ENCODE measurements at regions of chr19 and their contacts with region 1.

Region 1: DNA sequence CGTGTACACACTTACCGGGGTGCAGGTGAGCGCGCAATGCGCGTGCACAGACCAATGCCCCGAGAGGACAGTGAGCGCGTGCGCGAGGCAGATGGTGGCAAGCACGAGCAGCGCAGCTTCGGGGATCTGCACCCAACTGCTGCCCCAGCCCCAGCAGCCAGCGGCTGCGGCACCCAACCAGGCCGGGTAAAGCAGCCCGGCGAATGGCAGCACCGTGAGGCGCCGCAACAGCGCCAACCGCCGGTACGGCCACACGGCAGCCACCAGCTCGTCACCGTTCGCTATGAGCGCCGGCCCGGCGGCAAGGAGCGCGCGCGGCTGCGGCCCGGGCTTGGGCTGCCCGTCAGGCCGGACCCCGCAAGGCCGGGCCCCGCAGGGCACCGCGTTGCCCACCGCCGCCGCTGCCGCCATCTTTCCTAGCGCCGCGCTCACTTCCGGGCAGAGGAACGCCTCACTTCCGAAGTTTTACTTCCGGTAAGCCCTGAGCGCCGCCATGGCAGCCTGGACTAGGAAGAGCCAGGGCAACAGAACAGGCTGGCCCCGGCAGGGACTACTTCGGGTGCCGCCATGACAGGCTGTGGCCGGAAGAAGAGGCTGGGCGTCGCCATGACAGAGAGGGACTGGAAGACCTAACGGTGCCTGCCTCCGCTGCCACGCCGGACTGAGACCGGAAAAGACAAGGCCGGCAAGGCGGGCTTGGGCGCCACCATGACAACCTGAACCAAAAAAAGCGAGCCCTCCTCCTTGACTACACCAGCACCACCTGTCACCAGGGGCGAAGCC is at the start of gene ATP13A1:
- DNase-seq: peak; percentile 93
- H3K4me3 Mint-ChIP-seq: peak within 1 kb of the TSS; percentile 89
- H3K27ac Mint-ChIP-seq: peak within 1 kb of the TSS; percentile 98
- H3K4me1 Mint-ChIP-seq: peaks cover 24% of the 10 kb centered on the region
- H3K27me3 Mint-ChIP-seq: no peaks in the 10 kb centered on the region
- total RNA-seq, gene ATP13A1: 71.6 and 74.8 TPM in 2 replicates

Region 2: GRCh38 chr19:19597809-19598306 is 65.6 kb before region 1 on chr19:
- intact Hi-C with region 1: loop called (anchors 2 kb)
- DNase-seq: peak; percentile 70
- H3K4me3 Mint-ChIP-seq: peak overlapping the region; percentile 73
- H3K27ac Mint-ChIP-seq: peak overlapping the region; percentile 99
- H3K4me1 Mint-ChIP-seq: peaks cover 59% of the 10 kb centered on the region
- H3K27me3 Mint-ChIP-seq: no peaks in the 10 kb centered on the region

Region 3: DNA sequence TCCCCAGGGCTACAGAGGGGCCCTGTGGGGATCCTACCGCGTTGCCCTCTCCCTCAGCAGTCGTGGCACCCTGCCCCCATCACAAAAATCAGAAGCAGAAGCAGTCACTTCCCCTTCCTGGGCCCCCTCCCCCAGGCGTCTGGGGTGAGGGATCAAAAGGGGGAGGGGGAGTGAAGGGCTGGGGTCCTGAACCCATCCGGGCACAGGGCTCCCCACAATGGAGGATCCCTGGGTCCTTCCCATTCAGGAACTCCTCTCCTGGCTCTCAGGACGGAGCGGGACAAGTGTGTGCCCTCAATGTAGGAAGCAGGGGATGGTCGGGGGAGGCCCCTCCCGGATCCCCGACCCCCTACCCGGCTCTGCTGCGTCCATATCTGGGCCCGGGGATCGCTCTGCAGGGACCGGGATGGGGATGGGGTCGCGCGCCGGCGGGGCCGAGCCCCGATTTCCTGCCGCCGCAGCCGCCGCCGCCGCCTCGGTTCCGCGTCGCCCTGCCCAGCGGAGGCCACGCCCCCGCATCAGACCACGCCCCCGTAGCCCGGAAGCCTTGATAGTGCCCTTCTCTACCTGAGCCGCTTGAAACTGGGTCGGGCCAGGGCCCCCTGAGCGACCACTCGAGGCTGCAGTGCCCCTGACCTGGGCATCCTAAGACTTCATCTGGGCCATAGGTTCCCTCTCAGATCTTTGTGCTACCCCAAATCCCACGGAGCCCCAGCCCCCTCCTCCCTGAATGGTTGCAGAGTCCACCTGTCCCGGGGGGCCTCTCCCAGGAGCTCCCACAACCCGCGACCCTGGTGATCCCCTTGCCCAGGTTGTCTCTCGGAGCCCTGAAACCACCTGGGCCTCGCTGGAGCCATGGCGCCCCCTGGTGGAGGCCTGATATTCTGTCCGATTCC is 20.0 kb before region 1 on chr19 and contains the start of gene GMIP:
- intact Hi-C with region 1: loop called (anchors 2 kb)
- DNase-seq: peak; percentile 82
- H3K4me3 Mint-ChIP-seq: peak within 1 kb of the TSS; percentile 93
- H3K27ac Mint-ChIP-seq: peak within 1 kb of the TSS; percentile 94
- H3K4me1 Mint-ChIP-seq: peaks cover 12% of the 10 kb centered on the region
- H3K27me3 Mint-ChIP-seq: no peaks in the 10 kb centered on the region
- total RNA-seq, gene GMIP: 66.0 and 67.5 TPM in 2 replicates

Region 4: DNA sequence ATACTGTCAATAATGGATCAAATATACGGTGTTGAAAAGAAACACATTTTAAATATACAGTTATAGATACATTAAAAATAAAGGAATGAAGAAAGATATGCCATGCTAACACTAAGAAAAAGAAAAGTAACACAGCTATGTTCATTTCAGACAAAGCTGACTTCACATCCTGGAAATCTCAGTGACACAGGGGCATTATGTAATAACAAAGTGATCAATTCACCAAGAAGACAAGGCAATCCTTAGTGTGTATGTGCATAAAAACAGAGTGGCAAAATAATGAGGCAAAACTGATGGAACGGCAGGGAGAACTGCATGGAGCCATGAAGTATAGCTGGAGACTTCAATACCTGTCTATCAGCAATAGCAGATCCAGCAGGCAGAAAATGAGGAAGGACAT is 56.4 kb after region 1 on chr19:
- intact Hi-C with region 1: no loop called
- DNase-seq: no peak
- H3K4me3 Mint-ChIP-seq: no peak overlapping the region
- H3K27ac Mint-ChIP-seq: no peak overlapping the region
- H3K4me1 Mint-ChIP-seq: no peaks in the 10 kb centered on the region
- H3K27me3 Mint-ChIP-seq: no peaks in the 10 kb centered on the region

Region 5: DNA sequence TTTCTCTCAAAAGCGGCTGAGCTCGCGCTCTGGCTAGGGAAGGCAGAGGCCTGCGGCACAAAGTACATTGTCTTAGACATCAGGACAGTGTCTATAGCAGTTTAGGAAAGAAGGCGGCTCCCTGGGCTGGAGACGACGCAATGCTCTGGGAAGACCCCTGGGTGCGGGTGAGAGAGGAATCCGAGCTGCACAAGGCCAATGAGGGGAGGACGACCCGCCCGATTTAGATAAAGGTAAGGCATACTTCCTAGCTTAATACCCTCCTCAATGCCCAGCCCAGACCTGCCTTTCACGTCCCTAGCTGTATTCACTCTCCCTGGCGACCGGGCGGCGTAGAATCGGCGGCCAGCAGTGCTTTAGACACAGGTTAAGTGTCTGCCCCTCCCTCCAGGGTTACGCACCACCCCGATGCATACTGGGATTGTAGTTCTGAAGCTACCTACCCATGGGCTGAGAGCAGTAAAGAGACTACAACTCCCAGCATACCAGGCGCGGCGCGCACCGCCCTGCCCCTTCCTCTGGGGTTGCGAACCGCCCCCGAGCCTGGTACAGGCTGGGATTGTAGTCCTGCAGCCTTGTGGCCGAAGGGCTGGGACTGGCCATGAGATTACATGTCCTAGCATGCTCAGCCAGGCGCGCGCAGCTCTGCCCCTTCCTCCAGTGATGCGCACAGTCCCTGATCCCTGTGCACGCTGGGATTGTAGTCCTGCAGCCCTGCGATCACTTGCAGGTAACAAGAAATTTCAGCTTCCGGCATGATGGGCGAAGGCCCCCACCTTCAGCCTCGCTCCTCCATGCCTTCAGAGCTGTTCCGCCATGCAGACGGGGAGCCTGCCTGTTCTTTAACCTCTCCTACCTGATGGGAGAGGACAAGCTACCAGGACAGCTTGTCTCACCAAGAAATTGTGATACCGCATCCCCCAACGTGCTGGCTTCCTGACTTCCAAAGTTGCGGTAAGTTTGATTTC is 112.9 kb after region 1 on chr19:
- intact Hi-C with region 1: loop called (anchors 1 kb)
- DNase-seq: peak; percentile 89
- H3K4me3 Mint-ChIP-seq: peak overlapping the region; percentile 96
- H3K27ac Mint-ChIP-seq: peak overlapping the region; percentile 86
- H3K4me1 Mint-ChIP-seq: peaks cover 27% of the 10 kb centered on the region
- H3K27me3 Mint-ChIP-seq: no peaks in the 10 kb centered on the region

Region 6: DNA sequence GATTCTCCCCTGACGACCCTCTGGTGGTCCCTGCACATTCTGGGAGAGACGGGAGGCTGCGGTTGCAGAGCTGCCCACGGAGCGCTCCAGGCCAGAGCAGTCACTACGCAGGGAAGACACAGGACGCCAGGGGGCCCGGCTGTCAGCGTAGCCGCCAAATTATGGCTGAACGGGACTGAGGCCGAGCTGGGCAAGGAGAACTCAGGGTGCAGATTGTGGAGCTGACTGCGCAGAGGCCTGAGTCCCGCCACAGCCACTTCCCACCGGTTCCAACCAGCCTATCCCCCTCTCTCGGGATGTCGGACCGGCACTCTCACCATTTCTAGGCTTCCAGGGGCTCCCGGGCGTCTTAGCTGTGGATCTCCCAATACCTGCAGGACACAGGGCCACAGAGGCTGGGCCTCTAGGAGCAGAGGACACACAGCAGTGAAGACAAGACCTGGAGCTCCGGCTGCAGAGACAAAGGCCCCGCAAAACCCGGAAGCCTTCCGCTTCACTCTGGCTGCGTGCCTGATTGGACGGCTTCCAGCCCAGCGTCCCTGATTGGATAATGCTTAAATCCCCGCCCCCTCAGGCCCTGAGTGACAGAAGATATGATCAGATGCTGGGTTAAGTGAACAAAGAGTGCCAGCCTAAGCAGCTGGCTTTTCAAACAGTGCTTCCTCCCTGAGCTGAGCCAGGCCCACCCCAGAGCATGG is 902.0 kb after region 1 on chr19 and contains the start of gene ZNF737:
- intact Hi-C with region 1: loop called (anchors 10 kb)
- DNase-seq: peak; percentile 86
- H3K4me3 Mint-ChIP-seq: peak within 1 kb of the TSS; percentile 97
- H3K27ac Mint-ChIP-seq: peak within 1 kb of the TSS; percentile 97
- H3K4me1 Mint-ChIP-seq: peaks cover 12% of the 10 kb centered on the region
- H3K27me3 Mint-ChIP-seq: no peaks in the 10 kb centered on the region
- total RNA-seq, gene ZNF737: 7.0 TPM in 2 replicates